ENCODE measurements at regions of chr7 and their contacts with region 1.

Region 1: GRCh38 chr7:35801392-35802101 is 690 bp downstream of the SEPTIN7 start:
- DNase-seq: peak; percentile 65 to 78 (median 75)
- ATAC-seq: peak; percentile 55
- H3K4me3 ChIP-seq: peak overlapping the region; percentile 78
- H3K4me3 Mint-ChIP-seq: peak overlapping the region; percentile 78 to 98 (median 93)
- H3K27ac ChIP-seq: peak overlapping the region; percentile 96
- H3K27ac Mint-ChIP-seq: peak overlapping the region; percentile 58 to 100 (median 99)
- H3K4me1 ChIP-seq: peaks cover 37 to 49% of the 10 kb centered on the region in 2 donors
- H3K4me1 Mint-ChIP-seq: peaks cover 43 to 59% (median 52%) of the 10 kb centered on the region in 7 donors
- H3K27me3 ChIP-seq: no peaks in the 10 kb centered on the region
- H3K27me3 Mint-ChIP-seq: no peaks in the 10 kb centered on the region

Region 2: GRCh38 chr7:35694781-35695472 is 106.6 kb before region 1 on chr7 and contains the start of gene HERPUD2:
- CTCF ChIA-PET with region 1: interaction called, 6 read pairs
- POLR2A ChIA-PET with region 1: interaction called, 110 read pairs
- intact Hi-C with region 1: loop called (anchors 1 kb)
- DNase-seq: peak; percentile 89 to 94 (median 93)
- ATAC-seq: peak; percentile 92
- H3K4me3 ChIP-seq: peak within 1 kb of the TSS; percentile 92
- H3K4me3 Mint-ChIP-seq: peak within 1 kb of the TSS; percentile 88 to 99 (median 97)
- H3K27ac ChIP-seq: peak within 1 kb of the TSS; percentile 98
- H3K27ac Mint-ChIP-seq: peak within 1 kb of the TSS; percentile 93 to 100 (median 98)
- H3K4me1 ChIP-seq: peaks cover 16 to 18% of the 10 kb centered on the region in 2 donors
- H3K4me1 Mint-ChIP-seq: peaks cover 47 to 62% (median 57%) of the 10 kb centered on the region in 7 donors
- H3K27me3 ChIP-seq: no peaks in the 10 kb centered on the region
- H3K27me3 Mint-ChIP-seq: no peaks in the 10 kb centered on the region
- total RNA-seq, gene HERPUD2: 38.1 to 92.6 (median 62.4) TPM

Region 3: DNA sequence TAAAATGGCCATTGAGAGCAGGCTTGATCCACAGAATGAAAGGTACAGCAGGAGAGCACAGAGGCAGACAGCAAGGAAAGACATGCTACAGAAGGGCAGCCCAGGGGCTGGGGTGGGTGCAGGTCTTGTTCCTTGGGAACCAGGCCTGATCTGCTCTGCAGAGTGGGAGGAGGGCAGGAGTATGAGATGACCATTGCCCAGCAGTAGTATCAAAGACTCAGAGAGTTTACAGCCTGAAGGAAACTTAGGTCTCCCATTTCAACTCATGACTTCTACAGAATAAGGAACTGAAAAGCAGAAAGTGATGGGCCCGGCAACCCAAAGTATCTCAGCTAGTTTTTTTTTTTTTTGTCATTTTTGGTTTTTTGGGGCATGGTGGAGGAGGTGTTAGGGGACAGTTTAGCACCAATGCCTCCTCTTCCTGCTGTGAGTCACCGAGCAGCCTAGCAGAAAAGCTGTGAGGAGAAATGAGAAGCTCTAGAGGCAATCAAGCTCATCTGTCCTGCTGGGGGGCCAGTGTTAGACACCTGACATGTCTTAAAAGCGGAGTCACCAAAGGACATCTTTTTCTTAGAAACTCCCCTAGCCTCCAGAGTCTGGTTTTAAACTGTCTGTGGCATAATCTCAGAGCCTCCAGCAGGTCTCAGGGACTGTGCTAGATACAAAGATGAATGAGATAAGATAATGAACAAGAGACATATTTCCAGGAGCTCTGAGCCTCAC is 72.3 kb before region 1 on chr7:
- CTCF ChIA-PET with region 1: no interaction called
- POLR2A ChIA-PET with region 1: interaction called, 24 read pairs
- intact Hi-C with region 1: loop called in 1 of 2 experiments (anchors 2 kb)
- DNase-seq: peak in 1 of 9 donors; percentile 37
- ATAC-seq: peak; percentile 79
- H3K4me3 ChIP-seq: no peak overlapping the region
- H3K4me3 Mint-ChIP-seq: peak overlapping the region in 2 of 10 donors; percentile 21 to 53
- H3K27ac ChIP-seq: no peak overlapping the region
- H3K27ac Mint-ChIP-seq: peak overlapping the region in 4 of 9 donors; percentile 26 to 73 (median 45)
- H3K4me1 ChIP-seq: peaks cover 26 to 55% of the 10 kb centered on the region in 2 donors
- H3K4me1 Mint-ChIP-seq: peaks cover 23 to 54% (median 47%) of the 10 kb centered on the region in 7 donors
- H3K27me3 ChIP-seq: no peaks in the 10 kb centered on the region
- H3K27me3 Mint-ChIP-seq: peaks cover 0 to 19% (median 0%) of the 10 kb centered on the region in 5 donors

Region 4: DNA sequence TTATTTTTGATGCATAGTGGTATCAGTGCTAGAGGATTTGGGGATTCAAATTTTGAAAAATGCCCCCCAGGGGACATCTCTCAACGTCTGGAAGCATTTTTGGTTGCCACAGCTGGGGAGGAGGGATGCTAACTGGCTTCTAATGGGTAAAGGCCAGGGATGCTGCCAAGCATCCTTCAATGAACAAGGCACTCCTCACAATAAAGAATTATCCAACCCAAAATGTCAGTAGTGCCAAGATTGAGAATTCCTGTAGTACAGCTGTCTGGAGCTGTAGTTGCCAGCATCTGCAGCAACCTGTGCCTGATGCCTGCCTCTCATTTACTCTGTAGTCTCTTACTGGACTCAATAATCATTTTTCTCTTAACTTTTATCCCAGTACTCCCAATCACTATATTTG is 52.8 kb after region 1 on chr7:
- CTCF ChIA-PET with region 1: no interaction called
- POLR2A ChIA-PET with region 1: no interaction called
- intact Hi-C with region 1: loop called in 1 of 2 experiments (anchors 10 kb)
- DNase-seq: no peak
- ATAC-seq: no peak
- H3K4me3 ChIP-seq: no peak overlapping the region
- H3K4me3 Mint-ChIP-seq: peak overlapping the region in 2 of 10 donors; percentile 5 to 23
- H3K27ac ChIP-seq: no peak overlapping the region
- H3K27ac Mint-ChIP-seq: peak overlapping the region in 1 of 9 donors; percentile 22
- H3K4me1 ChIP-seq: peaks cover 0 to 1% of the 10 kb centered on the region in 2 donors
- H3K4me1 Mint-ChIP-seq: peaks cover 28 to 89% (median 70%) of the 10 kb centered on the region in 7 donors
- H3K27me3 ChIP-seq: no peaks in the 10 kb centered on the region
- H3K27me3 Mint-ChIP-seq: no peaks in the 10 kb centered on the region

Region 5: GRCh38 chr7:35906191-35906908 is 104.8 kb after region 1 on chr7:
- CTCF ChIA-PET with region 1: interaction called, 3 read pairs
- POLR2A ChIA-PET with region 1: interaction called, 6 read pairs
- intact Hi-C with region 1: loop called (anchors 1 to 5 kb)
- DNase-seq: peak; percentile 21 to 79 (median 70)
- ATAC-seq: peak; percentile 97
- H3K4me3 ChIP-seq: no peak overlapping the region
- H3K4me3 Mint-ChIP-seq: no peak overlapping the region
- H3K27ac ChIP-seq: no peak overlapping the region
- H3K27ac Mint-ChIP-seq: peak overlapping the region in 6 of 9 donors; percentile 37 to 88 (median 66)
- H3K4me1 ChIP-seq: no peaks in the 10 kb centered on the region
- H3K4me1 Mint-ChIP-seq: peaks cover 0 to 10% (median 0%) of the 10 kb centered on the region in 7 donors
- H3K27me3 ChIP-seq: no peaks in the 10 kb centered on the region
- H3K27me3 Mint-ChIP-seq: no peaks in the 10 kb centered on the region

Region 6: GRCh38 chr7:36291387-36292316 is 490.1 kb after region 1 on chr7:
- CTCF ChIA-PET with region 1: no interaction called
- POLR2A ChIA-PET with region 1: interaction called, 17 read pairs
- intact Hi-C with region 1: loop called in 1 of 2 experiments (anchors 1 kb)
- DNase-seq: peak; percentile 37 to 78 (median 68)
- ATAC-seq: peak; percentile 76
- H3K4me3 ChIP-seq: peak overlapping the region; percentile 38
- H3K4me3 Mint-ChIP-seq: peak overlapping the region; percentile 54 to 83 (median 73)
- H3K27ac ChIP-seq: no peak overlapping the region
- H3K27ac Mint-ChIP-seq: peak overlapping the region in 8 of 9 donors; percentile 3 to 83 (median 50)
- H3K4me1 ChIP-seq: peaks cover 26% of the 10 kb centered on the region in 2 donors
- H3K4me1 Mint-ChIP-seq: peaks cover 29 to 47% (median 40%) of the 10 kb centered on the region in 7 donors
- H3K27me3 ChIP-seq: no peaks in the 10 kb centered on the region
- H3K27me3 Mint-ChIP-seq: no peaks in the 10 kb centered on the region

Region 7: DNA sequence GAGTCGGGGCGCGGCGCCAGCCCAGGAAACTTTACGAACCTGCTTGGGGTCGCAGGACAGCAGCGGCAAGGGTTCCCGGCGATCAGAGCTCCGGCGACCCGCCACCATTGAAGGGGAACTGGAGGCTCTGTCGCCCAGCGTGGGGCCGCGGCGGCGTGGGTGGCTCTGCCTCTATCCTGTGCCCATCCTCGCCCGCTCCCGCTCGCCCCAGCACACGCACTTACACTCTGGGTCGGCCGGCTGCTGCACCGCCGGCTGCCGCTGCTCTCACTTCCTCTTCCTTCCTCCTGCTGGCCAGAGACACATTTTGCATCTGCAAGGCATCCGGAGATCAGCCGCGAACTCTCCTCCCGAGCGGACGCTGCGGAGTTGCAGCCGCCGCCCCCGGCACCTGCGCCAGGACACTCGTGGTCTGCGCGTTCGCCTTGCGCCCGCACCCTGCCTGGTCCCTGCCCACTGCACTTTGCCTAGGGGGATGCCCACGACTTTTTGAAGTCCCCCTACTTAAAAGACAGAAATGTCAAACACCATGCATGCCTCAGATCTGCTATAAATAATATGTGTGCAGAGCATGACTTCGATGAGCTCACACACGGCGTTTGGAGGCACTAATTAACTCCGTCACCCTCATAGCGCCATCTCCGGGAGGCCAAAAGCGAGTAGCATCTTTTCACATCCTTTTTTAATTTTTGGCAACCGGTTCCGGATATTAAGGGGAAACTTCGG is 1647.3 kb after region 1 on chr7 and contains the start of gene ELMO1:
- CTCF ChIA-PET with region 1: no interaction called
- POLR2A ChIA-PET with region 1: no interaction called
- intact Hi-C with region 1: loop called (anchors 5 to 10 kb)
- DNase-seq: peak; percentile 63 to 87 (median 86)
- ATAC-seq: peak; percentile 83
- H3K4me3 ChIP-seq: peak within 1 kb of the TSS; percentile 83
- H3K4me3 Mint-ChIP-seq: peak within 1 kb of the TSS; percentile 94 to 99 (median 97)
- H3K27ac ChIP-seq: peak within 1 kb of the TSS; percentile 89
- H3K27ac Mint-ChIP-seq: peak within 1 kb of the TSS; percentile 97 to 100 (median 99)
- H3K4me1 ChIP-seq: peaks cover 8 to 29% of the 10 kb centered on the region in 2 donors
- H3K4me1 Mint-ChIP-seq: peaks cover 21 to 62% (median 54%) of the 10 kb centered on the region in 7 donors
- H3K27me3 ChIP-seq: no peaks in the 10 kb centered on the region
- H3K27me3 Mint-ChIP-seq: peaks cover 0 to 10% (median 0%) of the 10 kb centered on the region in 5 donors
- total RNA-seq, gene ELMO1: 119 to 160 (median 126) TPM

Measured in naive thymus-derived CD4-positive, alpha-beta T cell (primary cell).